H1 (cell line): ENCODE measurements at regions of chr11 and their contacts with region 1.

Region 1: GRCh38 chr11:103537904-103538502 is 428.8 kb downstream of the DYNC2H1 start:
- DNase-seq: no peak
- H3K4me3 ChIP-seq: no peak overlapping the region
- H3K27ac ChIP-seq: no peak overlapping the region
- H3K4me1 ChIP-seq: 0 out of 7 replicates have a peak, but pooled peaks cover 0 to 3% (median 0%) of the 10 kb centered on the region in 4 experiments
- H3K27me3 ChIP-seq: no peaks in the 10 kb centered on the region
- CTCF ChIP-seq: peak in 2 of 3 experiments; percentile 23 to 51; a peak in 2 of 4 replicates
- EP300 ChIP-seq: no peak
- POLR2A ChIP-seq: no peak
- RAD21 ChIP-seq: peak; percentile 41 to 48

Region 2: GRCh38 chr11:103257360-103257759 is 280.6 kb before region 1 on chr11:
- CTCF ChIA-PET with region 1: interaction called, 14 read pairs
- POLR2A ChIA-PET with region 1: no interaction called
- DNase-seq: no peak
- H3K4me3 ChIP-seq: no peak overlapping the region
- H3K27ac ChIP-seq: no peak overlapping the region
- H3K4me1 ChIP-seq: no peaks in the 10 kb centered on the region
- H3K27me3 ChIP-seq: no peaks in the 10 kb centered on the region
- CTCF ChIP-seq: peak in 2 of 3 experiments; percentile 51 to 62; a peak in 3 of 4 replicates
- EP300 ChIP-seq: no peak
- POLR2A ChIP-seq: no peak
- RAD21 ChIP-seq: peak; percentile 62 to 69

Region 3: GRCh38 chr11:103441021-103441420 is 97.0 kb before region 1 on chr11:
- CTCF ChIA-PET with region 1: no interaction called
- POLR2A ChIA-PET with region 1: no interaction called
- DNase-seq: no peak
- H3K4me3 ChIP-seq: no peak overlapping the region
- H3K27ac ChIP-seq: no peak overlapping the region
- H3K4me1 ChIP-seq: no peaks in the 10 kb centered on the region
- H3K27me3 ChIP-seq: no peaks in the 10 kb centered on the region
- CTCF ChIP-seq: no peak
- EP300 ChIP-seq: no peak
- POLR2A ChIP-seq: no peak
- RAD21 ChIP-seq: no peak

Region 4: GRCh38 chr11:103491777-103492176 is 46.2 kb before region 1 on chr11:
- CTCF ChIA-PET with region 1: interaction called, 10 read pairs
- POLR2A ChIA-PET with region 1: interaction called, 3 read pairs
- DNase-seq: peak in 1 of 2 experiments; percentile 58
- H3K4me3 ChIP-seq: no peak overlapping the region; a peak in 1 of 8 replicates
- H3K27ac ChIP-seq: no peak overlapping the region
- H3K4me1 ChIP-seq: peaks cover 0 to 9% (median 0%) of the 10 kb centered on the region in 4 experiments; a peak in 3 of 7 replicates
- H3K27me3 ChIP-seq: no peaks in the 10 kb centered on the region
- CTCF ChIP-seq: no peak
- EP300 ChIP-seq: no peak
- POLR2A ChIP-seq: no peak
- RAD21 ChIP-seq: no peak

Region 5: GRCh38 chr11:103515283-103515682 is 22.7 kb before region 1 on chr11:
- CTCF ChIA-PET with region 1: interaction called, 14 read pairs
- POLR2A ChIA-PET with region 1: no interaction called
- DNase-seq: no peak
- H3K4me3 ChIP-seq: no peak overlapping the region
- H3K27ac ChIP-seq: no peak overlapping the region
- H3K4me1 ChIP-seq: no peaks in the 10 kb centered on the region
- H3K27me3 ChIP-seq: no peaks in the 10 kb centered on the region
- CTCF ChIP-seq: no peak
- EP300 ChIP-seq: no peak
- POLR2A ChIP-seq: no peak
- RAD21 ChIP-seq: no peak

Region 6: GRCh38 chr11:103552086-103552485 is 14.1 kb after region 1 on chr11:
- CTCF ChIA-PET with region 1: interaction called, 44 read pairs
- POLR2A ChIA-PET with region 1: no interaction called
- DNase-seq: no peak
- H3K4me3 ChIP-seq: no peak overlapping the region
- H3K27ac ChIP-seq: no peak overlapping the region
- H3K4me1 ChIP-seq: no peaks in the 10 kb centered on the region
- H3K27me3 ChIP-seq: no peaks in the 10 kb centered on the region
- CTCF ChIP-seq: no peak
- EP300 ChIP-seq: no peak
- POLR2A ChIP-seq: no peak
- RAD21 ChIP-seq: no peak

Region 7: DNA sequence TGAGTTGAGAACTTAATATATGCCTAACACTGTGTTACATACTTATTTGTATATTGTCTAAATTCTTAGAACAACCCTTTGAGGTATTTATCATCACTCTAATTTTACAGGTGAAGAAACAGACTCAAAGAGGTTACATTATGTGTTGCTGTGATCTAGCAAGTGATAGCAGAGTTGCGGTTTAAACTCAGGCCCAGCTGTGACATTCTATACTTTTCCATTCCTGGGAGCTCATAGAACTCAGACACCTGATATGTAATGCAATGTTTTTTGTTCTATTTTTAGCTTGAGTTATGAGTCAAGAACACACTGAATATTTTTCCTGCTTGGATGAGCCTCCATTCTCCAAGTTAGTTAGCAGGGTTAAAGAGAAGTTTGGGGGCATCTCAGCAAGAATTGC is 48.8 kb after region 1 on chr11:
- CTCF ChIA-PET with region 1: interaction called, 12 read pairs
- POLR2A ChIA-PET with region 1: no interaction called
- DNase-seq: no peak
- H3K4me3 ChIP-seq: no peak overlapping the region
- H3K27ac ChIP-seq: no peak overlapping the region
- H3K4me1 ChIP-seq: no peaks in the 10 kb centered on the region
- H3K27me3 ChIP-seq: no peaks in the 10 kb centered on the region
- CTCF ChIP-seq: no peak
- EP300 ChIP-seq: no peak
- POLR2A ChIP-seq: no peak
- RAD21 ChIP-seq: no peak

Region 8: GRCh38 chr11:103624708-103625623 is 87.0 kb after region 1 on chr11:
- CTCF ChIA-PET with region 1: no interaction called
- POLR2A ChIA-PET with region 1: no interaction called
- DNase-seq: no peak
- H3K4me3 ChIP-seq: no peak overlapping the region
- H3K27ac ChIP-seq: no peak overlapping the region
- H3K4me1 ChIP-seq: peaks cover 0 to 3% (median 0%) of the 10 kb centered on the region in 4 experiments; a peak in 1 of 7 replicates
- H3K27me3 ChIP-seq: no peaks in the 10 kb centered on the region
- CTCF ChIP-seq: no peak
- EP300 ChIP-seq: no peak
- POLR2A ChIP-seq: no peak
- RAD21 ChIP-seq: no peak

Region 9: GRCh38 chr11:103709371-103709770 is 171.4 kb after region 1 on chr11:
- CTCF ChIA-PET with region 1: no interaction called
- POLR2A ChIA-PET with region 1: no interaction called
- DNase-seq: no peak
- H3K4me3 ChIP-seq: no peak overlapping the region
- H3K27ac ChIP-seq: no peak overlapping the region
- H3K4me1 ChIP-seq: no peaks in the 10 kb centered on the region
- H3K27me3 ChIP-seq: peaks cover 0 to 1% (median 0%) of the 10 kb centered on the region in 4 experiments; a peak in 1 of 7 replicates
- CTCF ChIP-seq: no peak
- EP300 ChIP-seq: no peak
- POLR2A ChIP-seq: no peak
- RAD21 ChIP-seq: no peak

Region 10: GRCh38 chr11:103789952-103790351 is 251.9 kb after region 1 on chr11:
- CTCF ChIA-PET with region 1: no interaction called
- POLR2A ChIA-PET with region 1: no interaction called
- DNase-seq: no peak
- H3K4me3 ChIP-seq: no peak overlapping the region
- H3K27ac ChIP-seq: no peak overlapping the region
- H3K4me1 ChIP-seq: no peaks in the 10 kb centered on the region
- H3K27me3 ChIP-seq: no peaks in the 10 kb centered on the region
- CTCF ChIP-seq: no peak
- EP300 ChIP-seq: no peak
- POLR2A ChIP-seq: no peak
- RAD21 ChIP-seq: no peak